GM12878 (cell line): ENCODE measurements at regions of chr1 and their contacts with region 1.

Region 1: GRCh38 chr1:89762779-89763648 is 57.8 kb upstream of the LRRC8D start:
- DNase-seq: peak; percentile 40
- ATAC-seq: peak; percentile 100
- H3K4me3 ChIP-seq: peak overlapping the region; percentile 66
- H3K27ac ChIP-seq: no peak overlapping the region
- H3K4me1 ChIP-seq: peaks cover 5% of the 10 kb centered on the region; the same call in 1 of the 2 replicates
- H3K27me3 ChIP-seq: no peaks in the 10 kb centered on the region
- CTCF ChIP-seq: peak; percentile 95 to 99 (median 99); a peak in 5 of 6 replicates
- EP300 ChIP-seq: no peak
- POLR2A ChIP-seq: no peak
- RAD21 ChIP-seq: peak; percentile 98

Region 2: GRCh38 chr1:89358287-89358893 is 404.6 kb before region 1 on chr1:
- CTCF ChIA-PET with region 1: no interaction called
- POLR2A ChIA-PET with region 1: no interaction called
- RAD21 ChIA-PET with region 1: no interaction called
- SMC1A ChIA-PET with region 1: no interaction called
- in situ Hi-C with region 1: no loop called
- intact Hi-C with region 1: no loop called
- DNase-seq: peak; percentile 27
- ATAC-seq: peak; percentile 94
- H3K4me3 ChIP-seq: no peak overlapping the region
- H3K27ac ChIP-seq: no peak overlapping the region
- H3K4me1 ChIP-seq: peaks cover 5% of the 10 kb centered on the region
- H3K27me3 ChIP-seq: no peaks in the 10 kb centered on the region
- CTCF ChIP-seq: peak; percentile 69 to 84 (median 77); a peak in 5 of 6 replicates
- EP300 ChIP-seq: no peak
- POLR2A ChIP-seq: no peak
- RAD21 ChIP-seq: peak; percentile 97

Region 3: GRCh38 chr1:89578946-89579684 is 183.9 kb before region 1 on chr1:
- CTCF ChIA-PET with region 1: interaction called, 3 read pairs
- POLR2A ChIA-PET with region 1: interaction called, 3 read pairs
- RAD21 ChIA-PET with region 1: interaction called, 7 read pairs
- SMC1A ChIA-PET with region 1: interaction called, 11 read pairs
- in situ Hi-C with region 1: no loop called
- intact Hi-C with region 1: no loop called
- DNase-seq: no peak
- ATAC-seq: no peak
- H3K4me3 ChIP-seq: no peak overlapping the region
- H3K27ac ChIP-seq: no peak overlapping the region
- H3K4me1 ChIP-seq: peaks cover 5% of the 10 kb centered on the region
- H3K27me3 ChIP-seq: no peaks in the 10 kb centered on the region
- CTCF ChIP-seq: no peak
- EP300 ChIP-seq: no peak
- POLR2A ChIP-seq: no peak
- RAD21 ChIP-seq: no peak

Region 4: GRCh38 chr1:89622895-89623294 is 140.1 kb before region 1 on chr1:
- CTCF ChIA-PET with region 1: interaction called, 369 read pairs
- POLR2A ChIA-PET with region 1: interaction called, 3 read pairs
- RAD21 ChIA-PET with region 1: interaction called, 302 read pairs
- SMC1A ChIA-PET with region 1: interaction called, 391 read pairs
- in situ Hi-C with region 1: loop called (anchors 5 kb)
- intact Hi-C with region 1: no loop called
- DNase-seq: no peak
- ATAC-seq: no peak
- H3K4me3 ChIP-seq: no peak overlapping the region
- H3K27ac ChIP-seq: no peak overlapping the region
- H3K4me1 ChIP-seq: no peaks in the 10 kb centered on the region; the same call in 1 of the 2 replicates
- H3K27me3 ChIP-seq: no peaks in the 10 kb centered on the region
- CTCF ChIP-seq: peak in 1 of 3 experiments; percentile 17; a peak in 1 of 6 replicates
- EP300 ChIP-seq: no peak
- POLR2A ChIP-seq: no peak
- RAD21 ChIP-seq: peak; percentile 15; the same call in 1 of the 2 replicates

Region 5: GRCh38 chr1:89657886-89658285 is 105.1 kb before region 1 on chr1:
- CTCF ChIA-PET with region 1: interaction called, 8 read pairs
- POLR2A ChIA-PET with region 1: interaction called, 7 read pairs
- RAD21 ChIA-PET with region 1: interaction called, 11 read pairs
- SMC1A ChIA-PET with region 1: interaction called, 16 read pairs
- in situ Hi-C with region 1: no loop called
- intact Hi-C with region 1: no loop called
- DNase-seq: peak; percentile 76
- ATAC-seq: peak; percentile 84
- H3K4me3 ChIP-seq: no peak overlapping the region
- H3K27ac ChIP-seq: peak overlapping the region; percentile 35
- H3K4me1 ChIP-seq: peaks cover 23% of the 10 kb centered on the region
- H3K27me3 ChIP-seq: no peaks in the 10 kb centered on the region
- CTCF ChIP-seq: no peak
- EP300 ChIP-seq: peak in 1 of 2 experiments; percentile 57; a peak in 1 of 4 replicates
- POLR2A ChIP-seq: no peak
- RAD21 ChIP-seq: no peak

Region 6: DNA sequence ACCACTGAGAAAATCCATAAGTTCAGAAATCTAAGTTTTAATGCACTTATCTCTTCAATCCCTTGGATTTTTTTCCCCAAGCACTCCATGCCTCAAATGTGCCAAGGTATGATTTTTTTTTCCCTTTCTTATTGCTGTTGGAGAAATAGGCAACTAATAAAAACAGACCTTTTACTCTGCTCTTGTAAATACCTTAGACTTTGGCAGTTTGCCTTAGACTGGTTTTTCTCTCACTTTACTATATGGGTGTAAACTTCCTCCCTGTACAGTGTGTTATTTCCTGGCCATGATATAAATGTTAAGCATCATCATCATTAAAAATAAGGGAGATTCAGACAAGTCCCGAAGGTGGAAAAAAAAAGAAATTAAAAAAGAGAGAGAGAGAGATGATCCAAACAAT is 64.4 kb before region 1 on chr1:
- CTCF ChIA-PET with region 1: interaction called, 41 read pairs
- POLR2A ChIA-PET with region 1: interaction called, 7 read pairs
- RAD21 ChIA-PET with region 1: interaction called, 15 read pairs
- SMC1A ChIA-PET with region 1: interaction called, 17 read pairs
- in situ Hi-C with region 1: no loop called
- intact Hi-C with region 1: loop called (anchors 2 kb)
- DNase-seq: no peak
- ATAC-seq: no peak
- H3K4me3 ChIP-seq: no peak overlapping the region
- H3K27ac ChIP-seq: no peak overlapping the region; the same call in 1 of the 2 replicates
- H3K4me1 ChIP-seq: peaks cover 22% of the 10 kb centered on the region
- H3K27me3 ChIP-seq: no peaks in the 10 kb centered on the region
- CTCF ChIP-seq: no peak
- EP300 ChIP-seq: no peak
- POLR2A ChIP-seq: no peak
- RAD21 ChIP-seq: no peak

Region 7: DNA sequence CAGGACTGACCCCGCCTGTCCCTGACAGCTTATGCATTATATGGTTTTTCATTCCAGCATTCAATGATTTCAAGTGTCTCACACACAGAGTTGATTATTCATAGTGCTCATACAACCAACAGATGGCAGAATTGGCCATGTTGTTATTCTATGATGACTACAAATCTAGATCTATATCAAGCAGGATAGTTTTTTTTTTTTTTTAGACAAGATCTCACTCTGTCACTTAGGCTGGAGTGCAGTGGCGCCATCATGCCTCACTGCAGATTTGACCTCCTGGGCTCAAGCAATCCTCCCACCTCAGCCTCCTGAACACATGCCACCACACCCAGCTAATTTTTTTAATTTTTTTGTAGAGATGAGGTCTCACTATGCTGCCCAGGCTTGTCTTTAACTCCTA is 17.7 kb after region 1 on chr1:
- CTCF ChIA-PET with region 1: interaction called, 36 read pairs
- POLR2A ChIA-PET with region 1: interaction called, 7 read pairs
- RAD21 ChIA-PET with region 1: interaction called, 37 read pairs
- SMC1A ChIA-PET with region 1: interaction called, 23 read pairs
- in situ Hi-C with region 1: no loop called
- intact Hi-C with region 1: no loop called
- DNase-seq: no peak
- ATAC-seq: peak; percentile 71
- H3K4me3 ChIP-seq: no peak overlapping the region
- H3K27ac ChIP-seq: no peak overlapping the region
- H3K4me1 ChIP-seq: peaks cover 13% of the 10 kb centered on the region; the same call in 1 of the 2 replicates
- H3K27me3 ChIP-seq: no peaks in the 10 kb centered on the region
- CTCF ChIP-seq: peak; percentile 25 to 43 (median 34); a peak in 4 of 6 replicates
- EP300 ChIP-seq: no peak
- POLR2A ChIP-seq: no peak
- RAD21 ChIP-seq: peak; percentile 66